ENCODE measurements at regions of chr2 and their contacts with region 1.

Region 1: DNA sequence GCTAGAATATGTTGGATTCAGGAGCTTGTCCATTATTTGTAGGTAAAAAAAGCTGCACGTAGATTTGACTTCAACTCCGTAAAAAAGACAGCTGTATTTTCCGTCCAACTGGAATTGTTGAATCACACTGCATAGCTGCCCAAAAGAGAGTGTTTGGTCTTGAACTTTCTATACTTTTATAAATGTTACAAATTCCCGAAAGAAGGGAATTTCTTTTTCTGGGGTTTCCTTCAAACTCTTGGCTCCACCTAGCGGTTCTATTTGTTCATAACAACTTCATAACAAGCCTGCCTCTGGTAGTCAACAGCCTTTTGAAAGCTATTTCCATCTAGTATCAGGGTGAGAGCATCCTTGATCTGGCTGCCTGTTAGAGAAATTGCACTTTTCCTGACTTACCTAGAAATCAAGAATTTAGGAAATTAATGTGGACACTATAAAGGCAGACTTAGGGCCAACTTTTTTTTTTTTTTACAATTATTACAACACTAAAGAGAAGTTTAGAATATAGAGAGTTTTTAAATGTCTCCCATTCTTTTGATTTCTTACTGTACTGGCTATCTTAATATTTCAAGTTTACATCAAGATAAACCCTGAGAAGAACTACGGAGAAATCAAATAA is 48.1 kb downstream of the TMEM185B start:
- DNase-seq: no peak
- H3K4me3 ChIP-seq: no peak overlapping the region
- H3K27ac ChIP-seq: peak overlapping the region in 1 of 2 donors; percentile 38
- H3K4me1 ChIP-seq: peaks cover 0 to 4% (median 0%) of the 10 kb centered on the region in 4 donors
- H3K27me3 ChIP-seq: no peaks in the 10 kb centered on the region
- CTCF ChIP-seq: peak; percentile 75 to 77

Region 2: DNA sequence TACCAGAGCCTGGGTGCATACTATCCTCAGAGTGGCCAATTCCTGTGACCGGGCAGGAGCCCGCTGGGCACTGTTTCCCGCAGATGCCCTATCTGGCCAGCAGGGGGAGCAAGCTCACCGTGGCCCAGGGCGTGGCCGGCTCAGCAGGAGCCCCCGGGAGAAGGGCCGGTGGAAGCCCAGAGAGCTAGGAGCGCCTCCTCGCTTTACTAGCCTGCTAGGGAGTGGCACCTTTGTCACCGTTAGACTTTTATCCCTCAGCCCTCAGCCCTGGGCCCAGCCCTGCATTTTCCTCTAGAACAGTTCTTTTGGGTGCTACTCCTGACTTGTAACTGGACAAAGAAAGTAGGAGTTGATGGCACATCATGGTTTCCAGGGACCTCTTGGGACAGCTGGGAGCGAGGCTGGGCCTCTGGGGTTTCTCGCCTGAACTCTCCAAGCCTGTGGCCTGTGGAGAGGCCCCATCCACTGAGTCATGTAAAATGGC is 472.1 kb before region 1 on chr2:
- intact Hi-C with region 1: loop called (anchors 10 kb)
- DNase-seq: peak in 1 of 2 donors; percentile 75
- H3K4me3 ChIP-seq: no peak overlapping the region
- H3K27ac ChIP-seq: no peak overlapping the region
- H3K4me1 ChIP-seq: peaks cover 0 to 14% (median 2%) of the 10 kb centered on the region in 4 donors
- H3K27me3 ChIP-seq: no peaks in the 10 kb centered on the region
- CTCF ChIP-seq: peak; percentile 78 to 83